Psoas muscle (tissue), 8 donors: ENCODE measurements at regions of chr17 and their contacts with region 1.

Region 1: GRCh38 chr17:9324864-9325263 is 250.8 kb downstream of the STX8 start:
- DNase-seq: no peak
- ATAC-seq: peak; percentile 70 to 92 (median 85)
- H3K4me3 ChIP-seq: no peak overlapping the region
- H3K27ac ChIP-seq: no peak overlapping the region
- H3K4me1 ChIP-seq: no peaks in the 10 kb centered on the region
- H3K27me3 ChIP-seq: no peaks in the 10 kb centered on the region
- CTCF ChIP-seq: no peak

Region 2: GRCh38 chr17:9261081-9262012 is 63.5 kb before region 1 on chr17:
- intact Hi-C with region 1: loop called in 1 of 2 experiments (anchors 10 kb)
- DNase-seq: no peak
- ATAC-seq: no peak
- H3K4me3 ChIP-seq: no peak overlapping the region
- H3K27ac ChIP-seq: no peak overlapping the region
- H3K4me1 ChIP-seq: peaks cover 3% of the 10 kb centered on the region
- H3K27me3 ChIP-seq: no peaks in the 10 kb centered on the region
- CTCF ChIP-seq: no peak

Region 3: DNA sequence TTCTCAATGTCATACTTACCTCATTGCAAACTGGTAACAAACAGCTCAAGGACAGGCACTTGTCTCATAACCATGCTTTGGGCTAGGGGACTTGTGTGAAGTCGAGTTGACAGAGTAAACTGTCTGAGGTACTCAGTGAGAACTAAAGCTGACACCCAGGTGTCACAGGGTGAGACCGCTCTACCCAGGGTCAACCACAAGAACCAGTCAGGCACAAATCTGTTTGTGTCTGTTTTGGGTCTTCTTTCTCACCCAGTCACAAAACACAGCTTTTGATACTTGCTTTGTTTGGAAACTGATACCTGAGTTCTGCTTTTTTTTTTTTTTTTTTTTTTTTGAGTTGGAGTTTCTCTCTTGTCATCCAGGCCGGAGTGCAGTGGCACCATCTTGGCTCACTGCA is 89.6 kb after region 1 on chr17:
- intact Hi-C with region 1: no loop called
- DNase-seq: no peak
- ATAC-seq: no peak
- H3K4me3 ChIP-seq: no peak overlapping the region
- H3K27ac ChIP-seq: no peak overlapping the region
- H3K4me1 ChIP-seq: peaks cover 4% of the 10 kb centered on the region
- H3K27me3 ChIP-seq: no peaks in the 10 kb centered on the region
- CTCF ChIP-seq: no peak

Region 4: DNA sequence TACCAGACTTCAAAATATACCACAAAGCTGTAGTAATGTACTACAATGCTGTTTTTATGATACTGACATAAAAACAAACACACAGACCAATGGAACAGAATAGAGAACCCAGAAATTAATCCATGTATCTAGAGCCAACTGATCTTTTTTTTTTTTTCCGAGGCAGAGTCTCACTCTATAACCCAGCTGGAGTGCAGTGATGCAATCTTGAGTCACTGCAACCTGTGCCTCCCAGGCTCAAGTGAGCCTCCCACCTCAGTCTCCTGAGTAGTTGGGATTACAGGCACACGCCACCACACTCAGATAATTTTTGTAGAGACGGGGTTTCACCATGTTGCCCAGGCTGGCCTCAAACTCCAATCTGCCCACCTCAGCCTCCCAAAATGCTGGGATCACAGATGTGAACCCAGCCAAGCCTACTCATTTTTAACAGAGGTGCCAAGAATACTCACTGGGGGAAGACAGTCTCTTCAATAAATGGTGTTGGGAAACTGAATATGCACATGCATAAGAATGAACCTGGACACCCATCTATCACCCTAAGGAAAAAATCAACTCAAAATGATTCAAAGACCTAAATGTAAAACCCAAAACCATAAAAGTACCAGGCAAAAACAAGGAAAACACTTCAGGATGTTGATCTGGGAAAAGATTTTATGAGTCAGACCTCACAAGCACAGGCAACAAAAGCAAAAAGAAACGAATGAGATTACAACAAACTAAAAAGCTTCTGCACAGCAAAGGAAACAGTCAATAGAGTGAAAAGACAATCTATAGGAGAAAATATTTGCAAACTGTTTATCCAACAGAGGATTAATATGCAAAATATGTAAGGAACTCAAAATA is 187.7 kb after region 1 on chr17:
- intact Hi-C with region 1: loop called in 1 of 2 experiments (anchors 10 kb)
- DNase-seq: no peak
- ATAC-seq: no peak
- H3K4me3 ChIP-seq: no peak overlapping the region
- H3K27ac ChIP-seq: no peak overlapping the region
- H3K4me1 ChIP-seq: no peaks in the 10 kb centered on the region
- H3K27me3 ChIP-seq: no peaks in the 10 kb centered on the region
- CTCF ChIP-seq: no peak